Panc1 (cell line): ENCODE measurements at regions of chr16 and their contacts with region 1.

Region 1: DNA sequence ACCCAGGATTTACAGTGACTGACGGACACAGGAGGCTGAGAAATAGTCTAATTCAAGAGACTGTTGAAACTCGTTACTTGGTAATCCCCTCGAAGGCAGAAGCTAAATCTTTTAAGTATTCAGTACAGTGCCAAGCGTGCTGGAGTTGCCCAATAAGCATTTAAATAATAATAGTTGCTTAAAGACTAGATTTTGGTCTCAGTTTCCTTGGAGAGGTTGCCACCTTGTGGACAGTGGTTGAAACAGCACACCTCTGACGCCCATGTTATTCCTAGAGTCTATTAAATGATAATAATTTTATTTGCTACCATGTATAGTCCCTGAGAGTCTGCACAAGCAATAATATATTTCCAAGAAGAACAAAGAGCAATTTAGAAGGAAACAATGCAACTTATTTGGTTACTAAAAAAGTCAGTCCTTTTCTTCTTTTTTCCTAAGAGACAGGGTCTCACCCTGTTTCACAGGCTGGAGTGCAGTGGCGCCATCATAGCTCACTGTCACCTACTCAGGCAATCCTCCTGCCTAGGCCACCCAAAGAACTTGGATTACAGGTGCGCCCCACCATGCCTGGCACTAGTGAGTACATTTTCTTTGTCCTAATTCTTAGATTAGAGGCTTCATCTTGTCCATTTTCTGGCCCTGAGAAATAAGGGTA is 138.0 kb upstream of the NUDT7 start:
- DNase-seq: peak; percentile 41
- ATAC-seq: peak; percentile 73
- H3K4me3 ChIP-seq: no peak overlapping the region
- H3K27ac ChIP-seq: peak overlapping the region; percentile 79
- H3K4me1 ChIP-seq: peaks cover 6% of the 10 kb centered on the region
- H3K27me3 ChIP-seq: no peaks in the 10 kb centered on the region
- CTCF ChIP-seq: peak; percentile 78

Region 2: GRCh38 chr16:77236063-77236511 is 348.2 kb before region 1 on chr16:
- CTCF ChIA-PET with region 1: interaction called, 5 read pairs
- POLR2A ChIA-PET with region 1: no interaction called
- in situ Hi-C with region 1: no loop called
- intact Hi-C with region 1: loop called (anchors 1 kb)
- DNase-seq: peak; percentile 62
- ATAC-seq: peak; percentile 94
- H3K4me3 ChIP-seq: peak overlapping the region in 1 of 2 experiments; percentile 26; a peak in 2 of 4 replicates
- H3K27ac ChIP-seq: peak overlapping the region; percentile 86
- H3K4me1 ChIP-seq: peaks cover 13% of the 10 kb centered on the region
- H3K27me3 ChIP-seq: no peaks in the 10 kb centered on the region
- CTCF ChIP-seq: peak; percentile 96

Region 3: DNA sequence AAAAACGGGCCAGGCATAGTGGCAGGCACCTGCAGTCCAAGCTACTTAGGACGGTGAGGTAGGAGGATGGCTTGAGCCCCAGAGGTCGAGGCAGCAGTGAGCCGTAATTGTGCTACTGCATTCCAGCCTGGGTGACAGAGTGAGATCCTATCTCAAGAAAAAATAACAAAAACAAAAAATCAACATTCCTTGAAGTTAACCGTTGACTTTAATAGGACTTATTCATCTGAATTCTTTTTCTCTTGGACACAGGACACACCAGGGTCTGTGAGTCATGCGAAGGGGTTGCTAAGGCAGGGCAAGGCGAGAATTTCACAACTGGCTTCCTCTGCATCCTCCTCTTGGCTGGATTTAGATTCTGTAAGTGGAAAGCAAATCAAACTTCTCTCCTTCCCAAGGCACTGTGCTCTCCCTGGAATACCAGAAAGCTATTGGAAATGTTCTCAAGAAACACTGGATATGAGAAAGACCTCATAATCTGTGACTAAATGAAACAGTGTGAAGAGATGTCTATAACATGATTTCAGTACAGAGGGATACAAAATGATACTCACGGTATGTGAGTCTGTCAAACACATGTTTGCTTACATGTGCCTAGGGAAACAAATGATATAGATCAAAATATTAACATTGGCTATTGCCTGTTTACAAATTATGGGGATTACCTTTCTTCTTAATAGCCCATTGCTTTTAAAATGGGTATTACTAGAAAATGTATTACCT is 285.5 kb before region 1 on chr16:
- CTCF ChIA-PET with region 1: no interaction called
- POLR2A ChIA-PET with region 1: no interaction called
- in situ Hi-C with region 1: no loop called
- intact Hi-C with region 1: loop called (anchors 1 kb)
- DNase-seq: peak; percentile 87
- ATAC-seq: peak; percentile 97
- H3K4me3 ChIP-seq: peak overlapping the region in 1 of 2 experiments; percentile 11; a peak in 2 of 4 replicates
- H3K27ac ChIP-seq: peak overlapping the region; percentile 98
- H3K4me1 ChIP-seq: peaks cover 27% of the 10 kb centered on the region
- H3K27me3 ChIP-seq: no peaks in the 10 kb centered on the region
- CTCF ChIP-seq: no peak

Region 4: DNA sequence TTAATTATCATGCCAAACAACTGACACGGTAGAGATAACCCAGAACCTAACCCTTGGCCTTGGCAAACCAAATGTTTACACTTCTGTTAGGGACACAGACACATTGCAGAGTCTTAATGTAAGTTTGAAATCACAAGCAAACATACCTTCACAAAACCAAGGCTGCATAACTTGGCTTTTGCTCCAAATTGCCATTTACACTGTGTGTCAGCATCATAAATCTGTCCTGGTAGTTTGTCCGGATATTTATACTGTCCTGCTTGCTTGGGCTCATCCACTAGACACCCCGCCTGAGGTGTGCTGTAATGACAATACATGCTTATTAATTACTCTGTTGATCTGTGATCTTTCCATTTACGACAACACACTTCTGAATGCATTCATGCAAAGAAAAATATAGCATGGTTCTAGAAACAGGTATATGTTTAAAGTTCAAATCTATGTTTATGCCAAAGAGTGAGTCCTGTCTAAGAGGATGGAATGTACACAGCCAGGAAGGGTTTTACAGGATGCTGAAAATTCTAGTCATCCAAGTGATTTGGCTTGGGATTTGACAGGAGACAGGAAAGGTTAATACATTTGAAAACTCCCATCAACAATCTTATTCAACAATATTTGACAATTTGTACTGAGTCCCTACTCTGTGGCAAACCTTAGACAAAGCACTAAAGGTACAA is 230.6 kb before region 1 on chr16:
- CTCF ChIA-PET with region 1: interaction called, 3 read pairs
- POLR2A ChIA-PET with region 1: no interaction called
- in situ Hi-C with region 1: loop called (anchors 10 kb)
- intact Hi-C with region 1: loop called (anchors 5 kb)
- DNase-seq: peak; percentile 55
- ATAC-seq: peak; percentile 96
- H3K4me3 ChIP-seq: no peak overlapping the region
- H3K27ac ChIP-seq: peak overlapping the region; percentile 89
- H3K4me1 ChIP-seq: peaks cover 13% of the 10 kb centered on the region
- H3K27me3 ChIP-seq: no peaks in the 10 kb centered on the region
- CTCF ChIP-seq: no peak

Region 5: GRCh38 chr16:77359065-77359502 is 225.2 kb before region 1 on chr16:
- CTCF ChIA-PET with region 1: interaction called, 3 read pairs
- POLR2A ChIA-PET with region 1: no interaction called
- in situ Hi-C with region 1: loop called (anchors 10 kb)
- intact Hi-C with region 1: loop called (anchors 5 kb)
- DNase-seq: peak; percentile 58
- ATAC-seq: peak; percentile 99
- H3K4me3 ChIP-seq: no peak overlapping the region
- H3K27ac ChIP-seq: peak overlapping the region; percentile 89
- H3K4me1 ChIP-seq: peaks cover 18% of the 10 kb centered on the region
- H3K27me3 ChIP-seq: no peaks in the 10 kb centered on the region
- CTCF ChIP-seq: no peak

Region 6: DNA sequence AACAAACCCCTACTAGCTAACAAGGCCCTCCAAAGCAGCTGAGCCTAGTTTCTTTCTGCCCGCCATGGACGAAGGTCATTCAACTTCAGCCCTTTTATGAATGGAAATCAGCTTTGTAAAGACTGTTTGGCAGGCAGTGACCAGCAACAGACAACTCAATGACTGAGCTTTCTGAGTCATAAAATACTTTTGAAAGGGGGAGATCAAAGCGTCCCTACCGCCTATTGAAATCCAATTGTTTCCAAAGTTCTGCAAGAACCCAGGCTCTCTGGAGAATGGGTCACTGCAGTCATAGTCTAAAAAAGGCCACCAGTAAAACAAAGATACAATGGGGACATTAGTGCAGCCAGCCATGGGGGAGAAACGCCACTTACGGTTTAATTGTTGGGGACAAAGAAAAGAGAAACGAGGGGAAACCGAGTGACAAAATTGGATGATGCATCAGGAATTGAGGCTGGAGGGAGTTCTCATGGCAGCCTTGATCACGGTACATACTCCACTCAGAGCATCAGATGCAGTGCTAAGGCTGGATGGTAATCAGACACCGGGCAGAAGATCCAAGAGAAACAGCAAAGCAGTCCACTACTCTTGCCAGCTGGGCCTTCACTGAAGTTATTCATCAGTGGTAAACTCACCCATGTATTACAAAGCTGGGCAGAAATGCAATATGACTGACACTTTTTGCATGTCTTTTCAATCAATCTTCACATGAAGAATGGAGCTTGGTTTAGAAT is 159.3 kb before region 1 on chr16:
- CTCF ChIA-PET with region 1: no interaction called
- POLR2A ChIA-PET with region 1: no interaction called
- in situ Hi-C with region 1: no loop called
- intact Hi-C with region 1: no loop called
- DNase-seq: no peak
- ATAC-seq: no peak
- H3K4me3 ChIP-seq: no peak overlapping the region
- H3K27ac ChIP-seq: no peak overlapping the region; the same call in 1 of the 2 replicates
- H3K4me1 ChIP-seq: no peaks in the 10 kb centered on the region
- H3K27me3 ChIP-seq: no peaks in the 10 kb centered on the region
- CTCF ChIP-seq: no peak

Region 7: DNA sequence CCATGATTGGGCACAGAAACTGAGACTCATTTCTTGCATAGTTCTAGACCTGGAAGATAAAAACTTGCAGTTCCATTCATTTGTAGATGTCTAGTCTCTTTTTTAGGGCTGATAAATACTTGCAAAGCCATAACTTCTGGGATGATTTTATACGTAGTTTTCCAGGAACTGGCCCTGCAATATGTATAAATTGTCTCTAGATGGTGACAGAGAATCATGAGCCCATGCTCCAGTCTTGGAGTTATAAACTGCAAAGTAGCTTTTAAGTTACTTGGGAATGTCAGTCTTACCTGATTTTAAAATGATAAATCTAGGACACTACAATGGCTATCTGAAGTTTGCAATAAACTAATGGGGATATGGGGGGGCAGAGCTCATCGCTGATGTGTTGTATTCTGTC is 146.5 kb before region 1 on chr16:
- CTCF ChIA-PET with region 1: no interaction called
- POLR2A ChIA-PET with region 1: no interaction called
- in situ Hi-C with region 1: no loop called
- intact Hi-C with region 1: loop called (anchors 5 kb)
- DNase-seq: no peak
- ATAC-seq: no peak
- H3K4me3 ChIP-seq: no peak overlapping the region
- H3K27ac ChIP-seq: peak overlapping the region; percentile 66; the same call in 1 of the 2 replicates
- H3K4me1 ChIP-seq: peaks cover 3% of the 10 kb centered on the region; the same call in 1 of the 2 replicates
- H3K27me3 ChIP-seq: no peaks in the 10 kb centered on the region
- CTCF ChIP-seq: peak; percentile 49; the same call in 1 of the 2 replicates

Region 8: GRCh38 chr16:77603701-77604380 is 19.5 kb after region 1 on chr16:
- CTCF ChIA-PET with region 1: no interaction called
- POLR2A ChIA-PET with region 1: no interaction called
- in situ Hi-C with region 1: no loop called
- intact Hi-C with region 1: no loop called
- DNase-seq: no peak
- ATAC-seq: no peak
- H3K4me3 ChIP-seq: no peak overlapping the region
- H3K27ac ChIP-seq: peak overlapping the region; percentile 51; the same call in 1 of the 2 replicates
- H3K4me1 ChIP-seq: no peaks in the 10 kb centered on the region
- H3K27me3 ChIP-seq: no peaks in the 10 kb centered on the region
- CTCF ChIP-seq: no peak

Region 9: DNA sequence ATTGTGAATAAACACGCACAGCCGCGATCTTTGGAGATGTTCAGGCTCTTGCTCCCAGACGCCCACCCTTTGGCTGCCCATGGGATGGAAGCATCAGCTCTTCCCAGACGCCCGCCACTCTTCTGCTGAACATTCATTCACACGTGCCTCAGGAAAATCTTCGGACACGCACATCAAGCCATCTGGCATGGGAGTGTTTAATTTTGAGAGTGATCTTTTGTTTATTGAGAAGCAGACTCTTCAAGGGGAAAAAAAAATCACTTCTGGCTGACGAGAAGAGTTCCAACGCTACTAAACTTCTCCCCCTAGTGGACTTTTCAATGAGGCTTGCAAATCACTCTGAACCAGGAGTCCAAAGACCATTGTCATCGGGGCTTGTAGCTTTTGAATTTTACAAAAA is 76.0 kb after region 1 on chr16:
- CTCF ChIA-PET with region 1: no interaction called
- POLR2A ChIA-PET with region 1: no interaction called
- in situ Hi-C with region 1: no loop called
- intact Hi-C with region 1: loop called (anchors 10 kb)
- DNase-seq: no peak
- ATAC-seq: no peak
- H3K4me3 ChIP-seq: no peak overlapping the region
- H3K27ac ChIP-seq: no peak overlapping the region
- H3K4me1 ChIP-seq: no peaks in the 10 kb centered on the region
- H3K27me3 ChIP-seq: no peaks in the 10 kb centered on the region
- CTCF ChIP-seq: peak; percentile 72